ENCODE measurements at regions of chr10 and their contacts with region 1.

Region 1: GRCh38 chr10:74262856-74263255 is 111.8 kb downstream of the ADK start:
- DNase-seq: no peak
- ATAC-seq: no peak
- H3K4me3 ChIP-seq: no peak overlapping the region
- H3K27ac ChIP-seq: no peak overlapping the region
- H3K4me1 ChIP-seq: no peaks in the 10 kb centered on the region; the same call in 1 of the 2 replicates
- H3K27me3 ChIP-seq: no peaks in the 10 kb centered on the region
- CTCF ChIP-seq: no peak

Region 2: GRCh38 chr10:75021379-75022249 is 758.8 kb after region 1 on chr10:
- CTCF ChIA-PET with region 1: no interaction called
- POLR2A ChIA-PET with region 1: no interaction called
- in situ Hi-C with region 1: no loop called
- intact Hi-C with region 1: loop called (anchors 2 kb)
- DNase-seq: no peak
- ATAC-seq: peak; percentile 39; the same call in 1 of the 2 replicates
- H3K4me3 ChIP-seq: no peak overlapping the region
- H3K27ac ChIP-seq: no peak overlapping the region
- H3K4me1 ChIP-seq: peaks cover 10% of the 10 kb centered on the region
- H3K27me3 ChIP-seq: no peaks in the 10 kb centered on the region
- CTCF ChIP-seq: no peak

Measured in Panc1 (cell line).